CD4-positive, alpha-beta memory T cell (primary cell): ENCODE measurements at regions of chr12 and their contacts with region 1.

Region 1: DNA sequence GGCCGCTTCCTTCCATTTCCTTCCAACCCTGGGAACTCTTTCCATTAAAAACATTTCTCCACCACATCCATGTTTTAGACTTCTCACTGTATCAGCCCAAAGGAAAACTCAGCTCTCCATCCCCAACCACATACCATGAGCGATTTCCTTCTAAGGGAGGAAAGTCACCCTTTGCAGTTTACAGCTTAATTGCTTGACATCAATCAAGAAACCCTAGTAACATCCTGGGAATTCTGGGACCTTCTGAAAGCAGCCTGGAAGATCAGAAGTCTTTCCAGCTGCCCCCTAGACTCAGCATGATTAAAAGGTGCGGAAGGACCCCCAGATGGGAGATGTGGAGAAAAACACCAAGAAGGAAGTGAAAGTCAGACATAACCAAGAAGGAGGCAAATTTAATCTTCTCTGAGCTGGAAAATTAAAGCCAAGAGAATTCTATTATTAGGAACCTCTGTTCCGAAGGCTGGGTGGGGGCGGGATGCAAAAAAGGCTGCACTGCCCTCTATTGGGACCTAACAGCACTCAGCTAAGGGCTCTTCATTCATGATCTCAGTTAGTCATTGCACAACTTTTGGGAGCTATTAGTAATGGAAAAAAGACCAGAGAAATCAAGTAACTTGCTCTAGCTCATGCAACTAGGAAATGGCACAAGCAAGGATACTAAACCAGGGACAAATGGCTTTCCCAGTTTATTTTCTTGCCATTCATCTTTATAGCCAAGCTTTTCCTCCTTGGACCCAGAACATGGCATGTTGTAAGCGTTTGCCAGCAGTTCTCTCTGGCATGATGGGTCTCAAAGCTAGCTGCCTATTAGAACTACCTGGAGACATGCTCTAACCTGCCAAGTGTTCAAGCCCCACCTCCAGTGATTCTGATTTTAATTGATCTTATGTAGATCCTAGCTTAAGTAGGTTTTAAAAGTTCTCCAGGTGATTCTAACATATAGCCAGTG is 73.1 kb upstream of the PLXNC1 start:
- DNase-seq: no peak
- H3K4me3 ChIP-seq: no peak overlapping the region
- H3K4me3 Mint-ChIP-seq: no peak overlapping the region
- H3K27ac ChIP-seq: no peak overlapping the region
- H3K27ac Mint-ChIP-seq: no peak overlapping the region
- H3K4me1 ChIP-seq: no peaks in the 10 kb centered on the region
- H3K4me1 Mint-ChIP-seq: peaks cover 14 to 25% (median 20%) of the 10 kb centered on the region in 4 donors
- H3K27me3 ChIP-seq: no peaks in the 10 kb centered on the region
- H3K27me3 Mint-ChIP-seq: peaks cover 1 to 5% of the 10 kb centered on the region in 2 donors

Region 2: GRCh38 chr12:93653079-93653478 is 422.2 kb before region 1 on chr12:
- CTCF ChIA-PET with region 1: no interaction called
- POLR2A ChIA-PET with region 1: no interaction called
- intact Hi-C with region 1: loop called (anchors 10 kb)
- DNase-seq: no peak
- H3K4me3 ChIP-seq: no peak overlapping the region
- H3K4me3 Mint-ChIP-seq: no peak overlapping the region
- H3K27ac ChIP-seq: no peak overlapping the region
- H3K27ac Mint-ChIP-seq: no peak overlapping the region
- H3K4me1 ChIP-seq: no peaks in the 10 kb centered on the region
- H3K4me1 Mint-ChIP-seq: no peaks in the 10 kb centered on the region
- H3K27me3 ChIP-seq: no peaks in the 10 kb centered on the region
- H3K27me3 Mint-ChIP-seq: peaks cover 2 to 4% of the 10 kb centered on the region in 2 donors

Region 3: DNA sequence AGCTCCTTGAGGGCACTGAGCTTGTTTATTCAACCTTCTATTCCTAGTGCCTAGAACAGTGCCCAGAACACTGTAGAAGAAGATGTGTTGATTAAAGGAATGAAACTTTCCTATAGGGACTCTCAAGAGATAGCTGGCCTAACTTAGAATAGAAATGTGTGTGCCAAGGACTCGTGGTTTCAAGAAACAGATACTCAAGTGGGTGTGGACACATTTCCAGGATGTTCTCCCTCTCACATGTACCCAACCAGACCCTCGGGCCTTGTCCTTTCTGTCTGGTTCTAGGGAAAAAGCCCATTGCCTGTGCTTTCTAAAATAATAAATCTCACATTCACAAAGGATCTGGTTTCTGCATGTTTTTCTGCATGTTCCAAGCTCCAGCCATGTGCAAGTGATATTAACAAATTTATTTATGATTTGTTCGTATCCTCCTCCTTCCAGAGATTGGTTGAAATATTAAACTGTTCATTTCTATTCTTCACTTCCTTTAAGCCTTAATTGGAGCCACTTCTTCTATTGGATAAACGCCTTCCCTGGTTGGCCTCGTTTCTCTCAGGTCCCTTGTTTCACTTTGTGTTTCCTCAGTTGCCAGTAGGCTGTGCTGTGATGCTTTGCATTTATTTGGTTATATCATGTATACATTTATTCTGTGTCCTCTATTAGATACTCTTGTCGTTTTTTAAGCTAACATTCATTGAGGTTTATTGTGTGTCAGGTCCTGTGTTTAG is 308.3 kb before region 1 on chr12:
- CTCF ChIA-PET with region 1: interaction called, 30 read pairs
- POLR2A ChIA-PET with region 1: interaction called, 3 read pairs
- intact Hi-C with region 1: loop called (anchors 1 kb)
- DNase-seq: peak; percentile 33 to 58 (median 37)
- H3K4me3 ChIP-seq: no peak overlapping the region
- H3K4me3 Mint-ChIP-seq: peak overlapping the region in 5 of 8 donors; percentile 1 to 60 (median 21)
- H3K27ac ChIP-seq: no peak overlapping the region
- H3K27ac Mint-ChIP-seq: peak overlapping the region; percentile 2 to 83 (median 12)
- H3K4me1 ChIP-seq: peaks cover 23% of the 10 kb centered on the region
- H3K4me1 Mint-ChIP-seq: peaks cover 18 to 32% (median 24%) of the 10 kb centered on the region in 4 donors
- H3K27me3 ChIP-seq: no peaks in the 10 kb centered on the region
- H3K27me3 Mint-ChIP-seq: no peaks in the 10 kb centered on the region

Region 4: GRCh38 chr12:93991829-93992461 is 83.3 kb before region 1 on chr12:
- CTCF ChIA-PET with region 1: no interaction called
- POLR2A ChIA-PET with region 1: no interaction called
- intact Hi-C with region 1: no loop called
- DNase-seq: no peak
- H3K4me3 ChIP-seq: no peak overlapping the region
- H3K4me3 Mint-ChIP-seq: no peak overlapping the region
- H3K27ac ChIP-seq: no peak overlapping the region
- H3K27ac Mint-ChIP-seq: no peak overlapping the region
- H3K4me1 ChIP-seq: no peaks in the 10 kb centered on the region
- H3K4me1 Mint-ChIP-seq: no peaks in the 10 kb centered on the region
- H3K27me3 ChIP-seq: no peaks in the 10 kb centered on the region
- H3K27me3 Mint-ChIP-seq: peaks cover 0 to 1% of the 10 kb centered on the region in 2 donors

Region 5: GRCh38 chr12:94405413-94406116 is 330.3 kb after region 1 on chr12:
- CTCF ChIA-PET with region 1: no interaction called
- POLR2A ChIA-PET with region 1: no interaction called
- intact Hi-C with region 1: no loop called
- DNase-seq: no peak
- H3K4me3 ChIP-seq: no peak overlapping the region
- H3K4me3 Mint-ChIP-seq: peak overlapping the region in 6 of 8 donors; percentile 9 to 62 (median 46)
- H3K27ac ChIP-seq: no peak overlapping the region
- H3K27ac Mint-ChIP-seq: peak overlapping the region in 6 of 7 donors; percentile 5 to 79 (median 51)
- H3K4me1 ChIP-seq: peaks cover 5% of the 10 kb centered on the region
- H3K4me1 Mint-ChIP-seq: peaks cover 8 to 9% (median 9%) of the 10 kb centered on the region in 4 donors
- H3K27me3 ChIP-seq: no peaks in the 10 kb centered on the region
- H3K27me3 Mint-ChIP-seq: no peaks in the 10 kb centered on the region